ENCODE measurements at regions of chr2 and their contacts with region 1.

Region 1: GRCh38 chr2:176978921-176979320 is 233.7 kb upstream of the HNRNPA3 start:
- DNase-seq: no peak
- ATAC-seq: no peak
- H3K4me3 ChIP-seq: no peak overlapping the region
- H3K27ac ChIP-seq: no peak overlapping the region
- H3K4me1 ChIP-seq: no peaks in the 10 kb centered on the region
- H3K27me3 ChIP-seq: no peaks in the 10 kb centered on the region
- CTCF ChIP-seq: no peak; a peak in 1 of 6 replicates
- EP300 ChIP-seq: no peak
- POLR2A ChIP-seq: no peak
- RAD21 ChIP-seq: no peak

Region 2: DNA sequence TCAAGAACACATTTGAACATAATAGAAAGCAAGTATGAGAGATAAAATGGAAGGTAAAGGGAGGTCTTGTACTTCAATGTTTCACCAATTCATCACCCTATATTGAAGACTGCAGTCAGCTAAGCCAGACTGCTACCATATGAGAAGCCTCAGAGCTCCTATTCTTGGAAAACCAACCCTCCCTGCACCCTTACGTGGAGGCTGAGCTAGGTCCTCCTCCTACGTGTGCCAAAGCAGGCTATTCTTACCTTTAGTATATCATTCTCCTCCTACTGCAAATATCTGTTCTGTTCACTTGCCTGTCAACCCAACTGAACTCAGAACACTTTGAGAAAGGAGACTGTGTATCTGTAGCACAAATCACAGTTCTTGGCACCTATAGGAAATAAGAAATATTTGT is 22.1 kb before region 1 on chr2:
- CTCF ChIA-PET with region 1: no interaction called
- POLR2A ChIA-PET with region 1: no interaction called
- RAD21 ChIA-PET with region 1: interaction called, 4 read pairs
- SMC1A ChIA-PET with region 1: no interaction called
- in situ Hi-C with region 1: no loop called
- intact Hi-C with region 1: loop called (anchors 1 kb)
- DNase-seq: no peak
- ATAC-seq: no peak
- H3K4me3 ChIP-seq: no peak overlapping the region
- H3K27ac ChIP-seq: no peak overlapping the region
- H3K4me1 ChIP-seq: no peaks in the 10 kb centered on the region
- H3K27me3 ChIP-seq: no peaks in the 10 kb centered on the region
- CTCF ChIP-seq: no peak
- EP300 ChIP-seq: no peak
- POLR2A ChIP-seq: no peak
- RAD21 ChIP-seq: no peak

Region 3: DNA sequence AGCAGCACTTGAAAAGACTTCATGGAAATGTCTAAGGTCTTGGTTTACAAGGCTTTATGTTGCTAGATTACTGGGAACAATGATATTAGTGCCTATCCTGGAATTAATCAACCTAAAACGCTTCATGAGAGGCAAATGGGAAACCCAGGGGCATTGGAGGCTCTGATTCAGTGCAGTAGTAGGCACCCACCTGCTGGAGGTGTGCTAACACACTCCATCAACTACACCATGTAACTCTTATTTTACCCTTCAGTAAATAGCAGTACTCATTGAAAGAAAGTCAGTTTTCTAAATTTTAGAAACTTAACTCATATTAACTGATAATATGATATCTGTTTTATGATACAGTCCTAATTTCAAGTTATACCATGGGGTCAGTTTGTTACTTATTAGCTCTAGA is 216.3 kb after region 1 on chr2:
- CTCF ChIA-PET with region 1: no interaction called
- POLR2A ChIA-PET with region 1: no interaction called
- RAD21 ChIA-PET with region 1: no interaction called
- SMC1A ChIA-PET with region 1: no interaction called
- in situ Hi-C with region 1: no loop called
- intact Hi-C with region 1: no loop called
- DNase-seq: no peak
- ATAC-seq: peak; percentile 86
- H3K4me3 ChIP-seq: no peak overlapping the region
- H3K27ac ChIP-seq: no peak overlapping the region
- H3K4me1 ChIP-seq: peaks cover 7% of the 10 kb centered on the region; the same call in 1 of the 2 replicates
- H3K27me3 ChIP-seq: no peaks in the 10 kb centered on the region
- CTCF ChIP-seq: peak; percentile 11 to 40 (median 23); a peak in 3 of 6 replicates
- EP300 ChIP-seq: no peak
- POLR2A ChIP-seq: no peak
- RAD21 ChIP-seq: peak; percentile 29; the same call in 1 of the 2 replicates